Transverse colon (tissue), 4 donors: ENCODE measurements at regions of chr17 and their contacts with region 1.

Region 1: GRCh38 chr17:4789901-4790704 is 1.3 kb downstream of the GLTPD2 start:
- DNase-seq: peak; percentile 91
- H3K4me3 ChIP-seq: peak overlapping the region; percentile 49 to 73 (median 68)
- H3K27ac ChIP-seq: peak overlapping the region; percentile 95 to 99 (median 98)
- H3K4me1 ChIP-seq: peaks cover 11 to 42% (median 37%) of the 10 kb centered on the region in 4 donors
- H3K27me3 ChIP-seq: peaks cover 13% of the 10 kb centered on the region
- CTCF ChIP-seq: peak; percentile 52 to 96 (median 74)
- EP300 ChIP-seq: no peak
- POLR2A ChIP-seq: peak; percentile 86

Region 2: DNA sequence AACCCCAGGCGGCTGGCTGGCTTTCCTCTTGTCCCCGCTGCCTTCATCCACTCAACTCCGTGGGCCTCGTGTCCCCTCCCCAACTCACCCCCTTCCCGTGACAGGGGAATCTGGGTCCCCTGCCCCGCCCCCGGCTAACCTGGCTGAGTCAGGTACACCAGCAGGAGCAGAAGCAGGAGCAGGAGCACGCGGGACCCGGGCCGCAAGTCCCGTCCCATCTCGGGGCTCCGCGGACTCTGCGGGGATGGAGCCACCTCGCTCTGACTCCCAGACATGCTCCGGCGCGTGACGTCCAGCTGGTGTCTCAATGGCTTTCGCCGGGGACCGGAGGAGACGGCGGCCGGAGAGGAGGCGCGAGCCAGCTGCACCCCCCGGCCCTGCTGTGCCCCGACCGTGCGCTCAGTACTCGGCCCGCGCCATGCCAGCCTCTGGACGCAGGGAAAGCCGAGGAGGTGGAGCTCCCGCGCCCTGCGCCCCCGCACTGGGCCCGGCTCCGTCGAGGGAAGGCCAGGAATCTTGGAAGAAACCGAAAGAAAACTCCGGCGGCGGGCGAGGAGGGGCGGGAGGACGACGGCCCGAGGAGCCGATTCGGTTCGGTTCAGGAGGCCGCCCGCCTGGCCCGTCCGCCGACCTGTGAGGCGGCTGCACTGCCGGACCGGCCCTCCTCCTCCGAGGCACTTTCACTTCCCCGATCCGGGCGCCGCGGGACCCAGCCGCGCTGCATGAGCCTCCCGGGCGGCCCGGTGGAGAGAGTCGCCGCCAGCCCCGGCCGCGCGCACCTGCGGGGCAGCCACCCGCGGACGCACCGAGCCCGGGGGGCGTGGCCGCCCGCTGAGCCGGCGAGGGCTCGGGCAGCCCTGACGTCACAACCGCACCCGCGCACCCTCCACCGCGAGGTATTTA is 50.7 kb before region 1 on chr17 and contains the starts of genes CXCL16 and ZMYND15:
- in situ Hi-C with region 1: loop called in 1 of 4 experiments (anchors 10 kb)
- intact Hi-C with region 1: loop called (anchors 10 kb)
- DNase-seq: peak; percentile 83
- H3K4me3 ChIP-seq: peak within 1 kb of the TSS; percentile 63 to 94 (median 80)
- H3K27ac ChIP-seq: peak within 1 kb of the TSS; percentile 42 to 75 (median 72)
- H3K4me1 ChIP-seq: peaks cover 6 to 16% (median 13%) of the 10 kb centered on the region in 4 donors
- H3K27me3 ChIP-seq: peaks cover 2% of the 10 kb centered on the region
- CTCF ChIP-seq: peak in 1 of 5 experiments; percentile 10
- EP300 ChIP-seq: no peak
- POLR2A ChIP-seq: peak; percentile 53
- total RNA-seq, gene CXCL16: 13.0 to 72.6 (median 27.0) TPM
- total RNA-seq, gene ZMYND15: 0.82 to 1.4 TPM in 2 of 4 donors, not detected in the others